Naive thymus-derived CD4-positive, alpha-beta T cell (primary cell): ENCODE measurements at regions of chr12 and their contacts with region 1.

Region 1: DNA sequence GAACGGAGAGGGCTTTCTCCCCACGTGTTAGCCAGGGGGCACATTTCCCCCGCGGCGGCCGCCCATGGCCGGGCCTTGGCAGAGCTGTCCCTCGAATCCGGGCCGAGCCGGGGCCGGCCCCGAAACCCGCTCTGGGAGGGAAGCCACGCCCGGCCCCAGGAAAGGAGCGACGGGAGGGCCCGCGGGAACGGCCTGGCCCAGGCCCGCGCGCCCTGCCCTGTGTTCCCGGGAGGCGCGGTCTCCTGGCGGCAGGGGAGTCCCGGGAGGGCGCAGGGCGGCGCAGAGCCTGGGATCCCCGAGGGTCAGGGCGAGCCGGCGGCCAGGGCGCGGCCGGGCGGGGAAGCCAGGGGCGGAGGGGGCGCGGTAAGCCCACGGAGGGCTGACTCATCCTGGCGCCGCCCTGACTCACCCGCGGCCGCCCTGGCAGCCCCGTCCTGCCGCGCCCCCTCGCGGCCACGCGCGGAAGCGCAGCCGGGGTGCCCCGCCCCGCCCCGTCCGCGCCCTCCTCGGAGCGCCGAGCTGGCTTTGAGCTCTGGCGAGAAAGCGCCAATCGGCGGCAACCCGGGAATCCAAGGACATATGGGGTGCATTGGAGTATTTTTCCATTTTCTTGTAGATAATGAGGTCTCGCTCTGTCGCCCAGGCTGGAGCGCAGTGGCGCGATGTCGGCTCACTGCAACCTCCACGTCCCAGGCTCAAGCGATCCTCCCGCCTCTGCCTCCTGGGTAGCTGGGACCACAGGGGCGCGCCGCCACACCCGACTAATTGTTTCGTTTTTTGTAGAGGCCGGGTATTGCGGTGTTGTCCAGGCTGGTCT is 31.8 kb upstream of the PLEKHG6 start:
- DNase-seq: peak; percentile 66 to 96 (median 83)
- ATAC-seq: peak; percentile 99
- H3K4me3 ChIP-seq: peak overlapping the region; percentile 23
- H3K4me3 Mint-ChIP-seq: peak overlapping the region; percentile 17 to 82 (median 71)
- H3K27ac ChIP-seq: no peak overlapping the region
- H3K27ac Mint-ChIP-seq: peak overlapping the region in 2 of 9 donors; percentile 22 to 72
- H3K4me1 ChIP-seq: peaks cover 0 to 3% of the 10 kb centered on the region in 2 donors
- H3K4me1 Mint-ChIP-seq: peaks cover 0 to 11% (median 6%) of the 10 kb centered on the region in 7 donors
- H3K27me3 ChIP-seq: peaks cover 0 to 3% of the 10 kb centered on the region in 2 donors
- H3K27me3 Mint-ChIP-seq: peaks cover 5 to 33% (median 19%) of the 10 kb centered on the region in 5 donors

Region 2: GRCh38 chr12:5988659-5989116 is 290.0 kb before region 1 on chr12:
- CTCF ChIA-PET with region 1: interaction called, 37 read pairs
- POLR2A ChIA-PET with region 1: no interaction called
- intact Hi-C with region 1: loop called in 1 of 2 experiments (anchors 1 kb)
- DNase-seq: peak; percentile 30 to 76 (median 68)
- ATAC-seq: peak; percentile 92
- H3K4me3 ChIP-seq: no peak overlapping the region
- H3K4me3 Mint-ChIP-seq: no peak overlapping the region
- H3K27ac ChIP-seq: no peak overlapping the region
- H3K27ac Mint-ChIP-seq: no peak overlapping the region
- H3K4me1 ChIP-seq: no peaks in the 10 kb centered on the region
- H3K4me1 Mint-ChIP-seq: peaks cover 0 to 3% (median 0%) of the 10 kb centered on the region in 7 donors
- H3K27me3 ChIP-seq: no peaks in the 10 kb centered on the region
- H3K27me3 Mint-ChIP-seq: peaks cover 0 to 2% (median 0%) of the 10 kb centered on the region in 5 donors

Region 3: DNA sequence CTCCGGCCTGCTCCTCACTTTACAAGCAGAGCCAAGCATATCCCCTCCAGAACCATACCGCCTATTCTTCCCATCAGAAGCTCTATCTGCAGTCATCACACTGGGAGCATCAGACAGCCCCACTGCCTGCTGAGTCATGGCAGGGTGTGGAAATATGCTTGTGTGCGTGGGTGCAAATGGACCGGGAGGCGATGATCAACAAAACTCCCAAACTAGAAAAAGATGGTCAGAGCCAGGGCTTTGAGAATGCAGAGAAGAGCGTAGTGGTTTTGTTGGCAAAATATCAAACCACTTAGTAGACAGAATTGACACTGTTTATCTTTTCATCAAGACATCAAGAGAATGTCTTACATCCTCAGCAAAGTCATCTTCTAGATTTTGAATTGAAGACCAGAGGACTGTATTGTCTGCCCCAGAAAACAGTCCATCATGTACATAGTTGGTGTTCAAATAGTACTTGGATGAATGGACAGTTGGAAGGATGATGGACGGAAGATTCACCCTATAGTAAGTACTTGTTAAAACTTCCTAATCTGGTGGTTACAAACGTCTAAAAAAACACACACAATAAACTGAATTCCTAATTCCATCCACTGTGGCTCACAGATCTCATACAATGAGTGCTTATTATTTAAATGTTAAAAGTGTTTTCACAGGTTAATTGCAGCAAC is 209.1 kb before region 1 on chr12:
- CTCF ChIA-PET with region 1: interaction called, 23 read pairs
- POLR2A ChIA-PET with region 1: interaction called, 4 read pairs
- intact Hi-C with region 1: loop called in 1 of 2 experiments (anchors 1 kb)
- DNase-seq: peak in 6 of 9 donors; percentile 19 to 50 (median 35)
- ATAC-seq: peak; percentile 36
- H3K4me3 ChIP-seq: no peak overlapping the region
- H3K4me3 Mint-ChIP-seq: peak overlapping the region in 7 of 10 donors; percentile 2 to 75 (median 13)
- H3K27ac ChIP-seq: no peak overlapping the region
- H3K27ac Mint-ChIP-seq: peak overlapping the region in 2 of 9 donors; percentile 2 to 50
- H3K4me1 ChIP-seq: peaks cover 3 to 16% of the 10 kb centered on the region in 2 donors
- H3K4me1 Mint-ChIP-seq: peaks cover 18 to 24% (median 22%) of the 10 kb centered on the region in 7 donors
- H3K27me3 ChIP-seq: no peaks in the 10 kb centered on the region
- H3K27me3 Mint-ChIP-seq: peaks cover 0 to 11% (median 2%) of the 10 kb centered on the region in 5 donors

Region 4: GRCh38 chr12:6074979-6075585 is 203.6 kb before region 1 on chr12:
- CTCF ChIA-PET with region 1: interaction called, 23 read pairs
- POLR2A ChIA-PET with region 1: interaction called, 4 read pairs
- intact Hi-C with region 1: loop called in 1 of 2 experiments (anchors 1 kb)
- DNase-seq: peak in 6 of 9 donors; percentile 30 to 48 (median 40)
- ATAC-seq: peak; percentile 84
- H3K4me3 ChIP-seq: peak overlapping the region; percentile 32
- H3K4me3 Mint-ChIP-seq: peak overlapping the region; percentile 83 to 94 (median 89)
- H3K27ac ChIP-seq: no peak overlapping the region
- H3K27ac Mint-ChIP-seq: peak overlapping the region in 7 of 9 donors; percentile 32 to 94 (median 52)
- H3K4me1 ChIP-seq: peaks cover 9 to 18% of the 10 kb centered on the region in 2 donors
- H3K4me1 Mint-ChIP-seq: peaks cover 23 to 29% (median 27%) of the 10 kb centered on the region in 7 donors
- H3K27me3 ChIP-seq: no peaks in the 10 kb centered on the region
- H3K27me3 Mint-ChIP-seq: peaks cover 0 to 30% (median 5%) of the 10 kb centered on the region in 5 donors

Region 5: DNA sequence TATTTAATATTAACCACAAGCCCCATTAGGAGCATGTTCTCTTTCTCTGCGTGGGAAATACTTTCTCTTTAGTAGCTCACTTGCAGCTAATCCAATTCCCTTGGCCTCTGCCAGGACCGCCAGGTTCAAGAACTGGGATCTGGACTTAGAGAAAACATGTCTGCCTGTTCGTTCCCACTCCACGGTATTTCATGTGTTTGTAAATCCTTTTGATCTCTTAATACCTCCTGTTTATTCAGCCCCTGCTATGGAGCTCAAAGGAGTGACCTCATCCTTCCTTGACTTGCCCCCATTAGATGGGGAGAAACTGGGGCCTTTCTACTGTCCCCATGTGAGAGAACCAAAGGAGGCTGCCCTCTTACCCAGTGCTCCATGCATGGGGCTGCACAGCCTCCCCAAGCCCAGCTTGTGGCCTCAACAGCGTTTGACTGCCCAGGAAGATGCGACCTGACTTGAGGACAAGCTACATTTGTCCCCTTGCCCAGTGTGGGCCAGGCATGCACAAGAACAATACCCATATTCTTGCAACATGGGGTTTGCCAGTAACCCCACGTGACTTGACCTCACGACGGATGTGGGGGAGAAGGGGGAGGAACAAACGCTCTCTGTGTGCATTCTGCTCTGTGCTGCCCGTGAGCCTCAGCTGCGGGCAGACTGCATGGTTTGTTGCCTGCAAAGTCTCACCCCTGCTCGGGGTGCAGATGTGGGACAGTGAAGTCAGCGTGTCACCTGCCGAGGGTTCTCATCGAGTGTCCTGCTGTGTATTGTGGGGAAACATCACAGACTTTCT is 48.1 kb before region 1 on chr12:
- CTCF ChIA-PET with region 1: interaction called, 4 read pairs
- POLR2A ChIA-PET with region 1: no interaction called
- intact Hi-C with region 1: loop called in 1 of 2 experiments (anchors 2 kb)
- DNase-seq: peak; percentile 33 to 77 (median 70)
- ATAC-seq: peak; percentile 95
- H3K4me3 ChIP-seq: no peak overlapping the region
- H3K4me3 Mint-ChIP-seq: peak overlapping the region; percentile 53 to 82 (median 72)
- H3K27ac ChIP-seq: peak overlapping the region; percentile 53
- H3K27ac Mint-ChIP-seq: peak overlapping the region; percentile 70 to 98 (median 94)
- H3K4me1 ChIP-seq: peaks cover 21 to 27% of the 10 kb centered on the region in 2 donors
- H3K4me1 Mint-ChIP-seq: peaks cover 22 to 43% (median 33%) of the 10 kb centered on the region in 7 donors
- H3K27me3 ChIP-seq: no peaks in the 10 kb centered on the region
- H3K27me3 Mint-ChIP-seq: peaks cover 0 to 2% (median 0%) of the 10 kb centered on the region in 5 donors

Region 6: GRCh38 chr12:6326336-6326838 is 47.7 kb after region 1 on chr12:
- CTCF ChIA-PET with region 1: no interaction called
- POLR2A ChIA-PET with region 1: no interaction called
- intact Hi-C with region 1: no loop called
- DNase-seq: no peak
- ATAC-seq: no peak
- H3K4me3 ChIP-seq: no peak overlapping the region
- H3K4me3 Mint-ChIP-seq: no peak overlapping the region
- H3K27ac ChIP-seq: peak overlapping the region; percentile 34
- H3K27ac Mint-ChIP-seq: peak overlapping the region in 8 of 9 donors; percentile 18 to 88 (median 69)
- H3K4me1 ChIP-seq: peaks cover 21 to 33% of the 10 kb centered on the region in 2 donors
- H3K4me1 Mint-ChIP-seq: peaks cover 39 to 56% (median 44%) of the 10 kb centered on the region in 7 donors
- H3K27me3 ChIP-seq: no peaks in the 10 kb centered on the region
- H3K27me3 Mint-ChIP-seq: no peaks in the 10 kb centered on the region